H1 (cell line): ENCODE measurements at regions of chr5 and their contacts with region 1.

Region 1: GRCh38 chr5:151051066-151051930 is 29.5 kb downstream of the TNIP1 start:
- DNase-seq: peak; percentile 63 to 88
- H3K4me3 ChIP-seq: no peak overlapping the region
- H3K27ac ChIP-seq: no peak overlapping the region
- H3K4me1 ChIP-seq: no peaks in the 10 kb centered on the region
- H3K27me3 ChIP-seq: no peaks in the 10 kb centered on the region
- CTCF ChIP-seq: peak; percentile 90 to 99 (median 98)
- EP300 ChIP-seq: no peak
- POLR2A ChIP-seq: no peak
- RAD21 ChIP-seq: peak; percentile 90 to 94

Region 2: GRCh38 chr5:150801117-150801927 is 250.0 kb before region 1 on chr5:
- CTCF ChIA-PET with region 1: interaction called, 10 read pairs
- POLR2A ChIA-PET with region 1: no interaction called
- DNase-seq: peak in 1 of 2 experiments; percentile 75
- H3K4me3 ChIP-seq: peak overlapping the region; percentile 52 to 60 (median 56)
- H3K27ac ChIP-seq: 0 out of 2 replicates have a peak overlapping the region, but pooled peaks have one; percentile 5
- H3K4me1 ChIP-seq: peaks cover 0 to 3% (median 0%) of the 10 kb centered on the region in 4 experiments; a peak in 1 of 7 replicates
- H3K27me3 ChIP-seq: no peaks in the 10 kb centered on the region
- CTCF ChIP-seq: peak in 2 of 3 experiments; percentile 57 to 72; a peak in 3 of 4 replicates
- EP300 ChIP-seq: no peak
- POLR2A ChIP-seq: no peak
- RAD21 ChIP-seq: peak; percentile 62 to 70

Region 3: DNA sequence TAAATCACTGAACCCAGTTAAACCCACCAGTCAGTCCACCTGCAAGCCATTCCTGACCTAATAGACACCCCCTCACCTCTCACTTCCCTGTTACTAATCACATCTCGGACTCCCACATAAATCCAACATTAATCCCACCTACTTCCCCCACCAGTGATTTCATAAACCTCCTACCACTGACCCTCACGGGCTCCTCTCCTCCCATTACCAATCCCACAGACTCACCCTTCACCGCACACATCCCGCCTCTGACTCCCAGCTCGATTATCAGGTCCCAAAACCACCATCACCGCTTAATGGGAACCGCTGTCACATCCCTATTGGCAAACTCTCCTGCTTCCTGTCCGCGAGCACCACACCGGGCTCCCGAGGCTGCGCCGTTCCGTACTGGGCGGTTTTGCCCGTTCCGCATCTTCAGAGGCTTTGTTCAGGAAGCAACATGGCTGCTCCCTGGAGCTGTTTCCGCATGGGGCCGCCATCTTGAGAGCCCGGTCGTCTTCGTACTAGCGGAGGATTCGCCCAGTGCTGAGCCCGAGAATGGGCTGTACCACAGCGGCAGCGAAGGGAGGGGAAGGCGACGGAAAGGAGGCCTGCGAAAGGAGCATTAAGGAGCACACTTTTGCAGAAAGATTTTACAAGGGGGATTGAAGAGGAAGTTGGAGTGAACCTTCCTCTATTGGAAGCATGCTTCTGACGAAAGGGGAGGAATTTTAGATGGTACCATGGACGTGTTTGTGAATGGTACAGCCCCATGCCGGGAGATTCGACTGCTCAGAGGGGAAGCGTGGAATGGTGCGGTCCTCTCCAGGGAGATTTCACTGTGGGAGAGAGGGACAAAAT is 146.6 kb before region 1 on chr5 and contains the start of gene ZNF300:
- CTCF ChIA-PET with region 1: no interaction called
- POLR2A ChIA-PET with region 1: no interaction called
- DNase-seq: peak; percentile 84 to 85
- H3K4me3 ChIP-seq: peak within 1 kb of the TSS; percentile 71 to 91 (median 76)
- H3K27ac ChIP-seq: peak within 1 kb of the TSS; percentile 100
- H3K4me1 ChIP-seq: no peaks in the 10 kb centered on the region
- H3K27me3 ChIP-seq: no peaks in the 10 kb centered on the region
- CTCF ChIP-seq: no peak
- EP300 ChIP-seq: peak in 1 of 2 experiments; percentile 99; a peak in 2 of 3 replicates
- POLR2A ChIP-seq: peak in 1 of 2 experiments; percentile 78; a peak in 1 of 3 replicates
- RAD21 ChIP-seq: no peak
- total RNA-seq, gene ZNF300: 15.2 and 15.8 TPM in 2 replicates

Region 4: DNA sequence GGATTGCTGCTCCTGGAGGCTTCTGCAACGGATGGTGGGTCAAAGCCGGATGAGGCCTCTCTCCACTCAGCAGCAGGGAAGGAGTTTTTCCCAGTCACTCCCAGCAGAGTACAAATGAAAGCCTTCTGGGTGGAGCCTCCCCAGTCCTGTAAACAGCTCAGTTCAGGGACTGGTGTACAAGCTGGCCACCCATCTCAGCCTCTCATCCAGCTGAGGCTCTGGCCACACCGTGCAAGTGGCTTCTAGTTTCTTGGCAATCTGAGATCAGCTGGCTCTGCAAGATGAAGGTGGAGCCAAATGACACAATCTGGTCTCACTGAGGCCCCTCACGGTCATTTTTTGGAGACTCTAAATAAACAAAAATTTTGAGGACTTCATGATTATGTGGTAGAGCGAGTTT is 20.9 kb before region 1 on chr5:
- CTCF ChIA-PET with region 1: interaction called, 157 read pairs
- POLR2A ChIA-PET with region 1: no interaction called
- DNase-seq: no peak
- H3K4me3 ChIP-seq: no peak overlapping the region
- H3K27ac ChIP-seq: no peak overlapping the region
- H3K4me1 ChIP-seq: no peaks in the 10 kb centered on the region
- H3K27me3 ChIP-seq: no peaks in the 10 kb centered on the region
- CTCF ChIP-seq: no peak
- EP300 ChIP-seq: no peak
- POLR2A ChIP-seq: no peak
- RAD21 ChIP-seq: no peak

Region 5: DNA sequence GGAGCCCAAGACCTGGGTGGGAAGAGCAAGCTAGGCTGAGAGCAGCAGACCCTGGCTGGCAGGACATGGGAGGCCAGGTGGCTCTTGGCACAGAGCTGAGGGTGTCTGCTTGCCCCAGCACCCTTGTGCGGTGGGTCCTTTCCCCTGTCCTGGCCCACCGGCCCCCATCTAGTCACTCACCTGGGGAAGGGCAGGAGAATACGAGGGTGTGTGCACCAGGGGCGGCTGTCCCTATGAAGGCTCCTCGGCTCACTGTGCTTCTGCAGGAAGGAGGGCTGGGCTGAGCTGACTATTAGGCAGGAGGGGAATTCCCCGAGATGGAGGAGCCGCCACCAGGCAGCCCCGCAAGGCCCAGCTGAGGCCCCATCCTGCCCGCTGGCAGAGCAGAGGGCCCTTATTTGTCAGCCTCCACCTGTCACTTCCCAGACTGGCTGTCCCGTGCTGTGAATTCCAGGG is 35.6 kb after region 1 on chr5:
- CTCF ChIA-PET with region 1: interaction called, 442 read pairs
- POLR2A ChIA-PET with region 1: interaction called, 3 read pairs
- DNase-seq: no peak
- H3K4me3 ChIP-seq: no peak overlapping the region
- H3K27ac ChIP-seq: no peak overlapping the region
- H3K4me1 ChIP-seq: peaks cover 0 to 4% (median 1%) of the 10 kb centered on the region in 4 experiments; a peak in 4 of 7 replicates
- H3K27me3 ChIP-seq: no peaks in the 10 kb centered on the region; a peak in 2 of 7 replicates
- CTCF ChIP-seq: no peak
- EP300 ChIP-seq: no peak
- POLR2A ChIP-seq: no peak
- RAD21 ChIP-seq: no peak

Region 6: GRCh38 chr5:151115274-151115905 is 64.1 kb after region 1 on chr5:
- CTCF ChIA-PET with region 1: interaction called, 777 read pairs
- POLR2A ChIA-PET with region 1: interaction called, 11 read pairs
- DNase-seq: peak; percentile 58 to 90
- H3K4me3 ChIP-seq: no peak overlapping the region
- H3K27ac ChIP-seq: no peak overlapping the region
- H3K4me1 ChIP-seq: no peaks in the 10 kb centered on the region
- H3K27me3 ChIP-seq: no peaks in the 10 kb centered on the region
- CTCF ChIP-seq: peak; percentile 88 to 94 (median 92)
- EP300 ChIP-seq: no peak
- POLR2A ChIP-seq: no peak
- RAD21 ChIP-seq: peak; percentile 91

Region 7: GRCh38 chr5:151164686-151165392 is 113.5 kb after region 1 on chr5:
- CTCF ChIA-PET with region 1: interaction called, 163 read pairs
- POLR2A ChIA-PET with region 1: interaction called, 3 read pairs
- DNase-seq: peak in 1 of 2 experiments; percentile 85
- H3K4me3 ChIP-seq: no peak overlapping the region
- H3K27ac ChIP-seq: no peak overlapping the region
- H3K4me1 ChIP-seq: no peaks in the 10 kb centered on the region; a peak in 1 of 7 replicates
- H3K27me3 ChIP-seq: no peaks in the 10 kb centered on the region
- CTCF ChIP-seq: peak; percentile 64 to 95 (median 92)
- EP300 ChIP-seq: no peak
- POLR2A ChIP-seq: no peak
- RAD21 ChIP-seq: peak; percentile 96 to 99